PC-3 (cell line): ENCODE measurements at regions of chr7 and their contacts with region 1.

Region 1: DNA sequence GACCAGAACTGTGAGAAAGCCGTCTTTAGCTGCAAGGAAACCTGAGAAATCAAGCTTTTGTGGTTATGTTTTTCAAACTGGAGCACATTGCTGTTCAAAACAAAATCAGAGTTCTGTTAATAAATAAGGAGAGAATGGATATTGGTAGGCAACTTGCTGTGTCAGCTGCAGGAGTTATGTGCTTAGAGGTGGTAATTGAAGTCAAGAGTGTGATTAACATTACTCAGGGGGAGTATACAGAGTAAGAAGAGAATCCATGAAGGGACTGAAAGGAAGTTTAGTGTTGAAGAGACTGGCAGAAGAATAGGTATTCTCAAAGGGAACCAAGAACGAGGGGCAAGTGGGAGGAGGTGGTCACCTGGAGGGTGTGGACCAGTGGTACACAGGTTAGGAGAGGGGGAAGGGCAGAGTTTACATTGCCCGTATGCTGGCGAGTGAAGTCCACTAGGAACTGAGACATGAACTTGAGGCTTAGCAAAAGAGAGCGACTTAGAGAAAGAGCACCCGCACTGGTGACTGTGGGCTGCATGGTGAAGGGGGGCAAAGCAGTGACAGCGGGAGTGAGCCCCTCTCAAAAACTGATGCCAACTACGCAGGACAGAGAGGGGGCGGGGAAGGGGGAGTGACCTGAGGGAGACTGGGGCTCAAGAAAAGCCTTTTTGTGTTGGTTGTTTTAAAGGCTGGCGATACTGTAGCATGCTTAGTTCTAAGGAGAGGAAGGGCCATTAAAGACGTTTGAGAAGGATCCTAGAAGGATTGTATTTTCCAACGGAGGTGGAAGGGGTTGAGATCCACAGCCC is 80.0 kb downstream of the SDK1 start:
- DNase-seq: no peak
- ATAC-seq: no peak
- H3K4me3 ChIP-seq: no peak overlapping the region
- H3K27ac ChIP-seq: no peak overlapping the region
- H3K4me1 ChIP-seq: peaks cover 17% of the 10 kb centered on the region
- H3K27me3 ChIP-seq: no peaks in the 10 kb centered on the region
- CTCF ChIP-seq: no peak

Region 2: DNA sequence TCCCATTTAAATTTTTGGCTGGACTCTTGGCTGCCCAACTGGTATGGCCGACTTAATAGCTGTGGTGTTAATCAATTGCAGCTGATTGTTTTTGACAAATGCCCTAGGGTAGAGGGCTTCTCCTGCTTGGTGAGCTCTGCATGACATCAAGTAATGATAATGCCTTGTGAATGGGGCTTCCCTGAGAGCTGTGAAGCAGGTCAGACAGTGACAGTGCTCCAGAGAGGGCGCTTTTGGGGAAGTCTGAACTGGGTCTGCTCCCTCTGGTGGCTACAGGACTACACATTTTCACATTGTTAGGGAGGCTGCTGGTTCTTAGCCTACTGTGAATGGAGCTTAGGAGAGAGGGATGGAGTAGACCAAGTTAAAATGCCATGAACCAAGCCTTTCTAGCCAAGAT is 18.8 kb after region 1 on chr7:
- CTCF ChIA-PET with region 1: no interaction called
- POLR2A ChIA-PET with region 1: no interaction called
- intact Hi-C with region 1: loop called (anchors 2 kb)
- DNase-seq: peak; percentile 55
- ATAC-seq: peak; percentile 96
- H3K4me3 ChIP-seq: no peak overlapping the region
- H3K27ac ChIP-seq: no peak overlapping the region
- H3K4me1 ChIP-seq: peaks cover 10% of the 10 kb centered on the region
- H3K27me3 ChIP-seq: no peaks in the 10 kb centered on the region
- CTCF ChIP-seq: peak; percentile 73

Region 3: DNA sequence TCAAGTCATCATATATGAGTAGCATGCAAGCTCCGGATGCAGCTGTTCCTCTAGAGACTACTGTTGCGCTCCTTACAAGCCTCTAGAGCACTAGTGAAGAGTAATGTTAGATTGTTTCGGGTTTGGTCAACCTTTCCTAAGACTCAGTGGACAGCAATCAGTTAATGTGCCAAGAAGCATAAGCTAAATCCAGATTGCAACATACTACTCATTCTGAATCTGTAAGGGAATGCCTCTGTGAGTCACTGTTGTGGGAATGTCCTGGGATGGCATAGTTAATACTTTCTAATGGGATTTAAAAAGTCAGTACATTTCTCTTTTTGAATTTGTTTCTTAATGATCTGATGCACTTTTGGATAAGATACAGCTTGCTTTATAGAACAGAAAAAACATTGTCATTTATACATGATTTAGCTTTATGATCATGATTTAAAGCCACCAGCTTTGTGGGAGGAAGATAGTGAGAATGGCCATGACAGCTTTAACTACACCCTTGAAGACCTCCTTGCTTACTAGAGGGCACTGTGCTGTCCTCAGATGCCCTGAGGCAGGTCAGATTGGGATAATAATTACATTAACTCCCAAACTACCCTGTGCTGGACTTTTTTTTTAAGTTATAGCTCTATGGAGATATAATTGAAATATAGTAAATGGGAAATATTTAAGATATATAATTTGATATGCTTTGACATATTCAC is 58.4 kb after region 1 on chr7:
- CTCF ChIA-PET with region 1: no interaction called
- POLR2A ChIA-PET with region 1: no interaction called
- intact Hi-C with region 1: loop called (anchors 1 kb)
- DNase-seq: peak; percentile 86
- ATAC-seq: peak; percentile 76
- H3K4me3 ChIP-seq: peak overlapping the region; percentile 28; the same call in 1 of the 2 replicates
- H3K27ac ChIP-seq: peak overlapping the region; percentile 37; the same call in 1 of the 2 replicates
- H3K4me1 ChIP-seq: peaks cover 34% of the 10 kb centered on the region
- H3K27me3 ChIP-seq: no peaks in the 10 kb centered on the region
- CTCF ChIP-seq: no peak